Left lung (tissue), 14 donors: ENCODE measurements at regions of chr17 and their contacts with region 1.

Region 1: DNA sequence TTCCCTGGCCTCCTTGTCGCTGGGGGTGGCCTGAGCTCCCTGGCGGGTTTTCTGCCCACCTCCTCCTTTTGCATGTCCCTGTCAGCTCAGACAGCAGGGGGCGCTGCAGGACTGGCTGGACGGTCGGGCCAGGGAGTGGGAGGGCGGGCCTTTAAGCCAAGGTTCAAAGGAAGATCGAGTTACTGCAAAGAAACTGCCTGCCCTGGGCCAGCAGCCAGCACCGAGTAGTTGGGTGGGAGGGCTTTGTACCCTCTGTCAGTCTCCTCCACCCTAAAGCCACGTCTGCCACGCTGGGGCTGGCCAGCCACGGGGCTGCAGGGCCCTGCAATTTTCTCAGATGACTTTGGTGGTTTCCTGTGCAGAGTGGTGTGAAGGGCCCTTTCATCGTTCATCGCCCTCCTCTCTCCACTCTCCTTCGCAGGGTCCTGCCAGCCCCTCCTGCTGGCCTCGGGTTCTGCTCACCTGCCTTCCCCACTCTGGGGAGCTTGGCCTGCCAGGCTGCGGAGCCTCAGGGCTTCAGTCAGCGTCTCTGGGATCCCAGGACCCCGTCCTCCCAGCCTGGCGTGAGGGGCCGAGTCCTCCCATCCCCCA is 12.3 kb downstream of the GPR142 start:
- DNase-seq: peak; percentile 90 to 98 (median 94)
- ATAC-seq: peak; percentile 92
- H3K4me3 ChIP-seq: no peak overlapping the region
- H3K27ac ChIP-seq: peak overlapping the region in 1 of 2 donors; percentile 18
- H3K4me1 ChIP-seq: peaks cover 11 to 15% of the 10 kb centered on the region in 2 donors
- H3K27me3 ChIP-seq: peaks cover 0 to 16% of the 10 kb centered on the region in 2 donors
- CTCF ChIP-seq: peak; percentile 80 to 95

Region 2: DNA sequence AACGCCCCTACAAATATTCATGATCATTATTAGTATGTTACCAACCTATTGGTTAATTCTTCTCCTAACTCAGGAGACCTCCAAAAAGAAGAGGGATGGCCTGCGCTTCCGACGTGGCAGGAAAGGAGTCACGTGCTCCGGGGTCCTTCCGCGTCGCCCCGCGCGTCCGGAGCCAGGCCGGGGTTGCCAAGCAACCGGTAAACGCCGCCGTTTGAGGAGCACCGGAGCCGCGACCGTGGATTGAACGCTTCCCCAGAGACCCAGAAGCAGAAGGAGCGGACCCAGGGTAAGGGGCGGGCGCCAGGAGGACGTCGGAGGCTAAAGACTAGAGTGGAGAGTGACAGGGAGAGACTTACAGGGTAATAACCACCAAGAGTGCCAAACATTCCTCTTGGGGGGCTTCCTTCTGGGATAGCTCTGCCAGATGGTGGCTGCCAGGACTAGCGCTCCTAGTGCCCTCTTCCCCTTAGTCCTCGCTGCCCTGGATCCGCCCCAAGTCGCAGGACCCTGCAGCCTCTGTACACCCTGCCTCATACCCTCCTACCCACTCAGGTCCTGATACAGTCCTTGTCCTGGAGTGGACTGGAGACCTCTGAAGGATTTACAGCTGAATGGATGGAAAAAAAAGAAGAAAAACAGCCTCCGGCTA is 105.4 kb before region 1 on chr17 and contains the start of gene DNAI2:
- intact Hi-C with region 1: no loop called
- DNase-seq: peak in 2 of 4 donors; percentile 79 to 82
- ATAC-seq: no peak
- H3K4me3 ChIP-seq: no peak within 1 kb of the TSS
- H3K27ac ChIP-seq: no peak within 1 kb of the TSS
- H3K4me1 ChIP-seq: peaks cover 5 to 14% of the 10 kb centered on the region in 2 donors
- H3K27me3 ChIP-seq: peaks cover 5 to 42% of the 10 kb centered on the region in 2 donors
- CTCF ChIP-seq: no peak
- polyA plus RNA-seq, gene DNAI2: 0.77 to 6.6 (median 4.1) TPM

Region 3: DNA sequence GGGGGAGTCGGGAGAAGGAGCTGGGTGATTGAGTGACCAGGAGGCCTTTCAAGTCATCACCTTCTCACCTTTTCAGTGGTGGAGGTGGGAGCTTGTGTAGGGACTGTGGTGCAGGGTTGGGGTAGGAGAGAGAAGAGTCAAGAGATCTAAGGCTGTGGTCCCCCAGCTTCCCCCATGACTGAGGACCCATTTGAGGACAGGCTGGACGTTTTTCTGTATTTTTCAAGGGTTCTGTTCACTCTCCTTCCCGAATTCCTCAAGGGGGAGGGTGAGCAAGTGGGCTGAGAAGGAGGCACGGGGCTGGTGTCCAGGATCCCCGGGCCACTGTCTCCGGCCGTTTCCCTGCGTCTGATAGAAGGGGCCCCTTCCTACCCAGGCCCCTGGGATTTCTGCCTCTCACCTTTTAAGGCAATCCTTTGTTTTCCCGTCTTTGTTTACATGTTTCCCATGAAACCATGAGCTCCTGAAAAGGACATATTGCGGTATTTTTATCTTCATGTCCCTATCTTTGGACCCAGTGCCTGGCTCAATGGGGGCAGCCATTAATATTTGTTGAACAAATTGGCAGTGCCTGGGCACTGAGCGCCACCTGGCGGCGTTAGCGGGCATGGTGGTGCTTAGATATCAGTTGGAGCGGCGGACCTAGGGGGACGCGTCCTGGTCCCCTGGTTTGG is 77.7 kb after region 1 on chr17:
- intact Hi-C with region 1: loop called (anchors 2 to 10 kb)
- DNase-seq: peak in 3 of 4 donors; percentile 78 to 95 (median 84)
- ATAC-seq: peak; percentile 37
- H3K4me3 ChIP-seq: no peak overlapping the region
- H3K27ac ChIP-seq: no peak overlapping the region
- H3K4me1 ChIP-seq: peaks cover 12 to 48% of the 10 kb centered on the region in 2 donors
- H3K27me3 ChIP-seq: peaks cover 0 to 12% of the 10 kb centered on the region in 2 donors
- CTCF ChIP-seq: peak; percentile 91 to 94